ENCODE measurements at regions of chr17 and their contacts with region 1.

Region 1: GRCh38 chr17:1648963-1649843 is 463 bp downstream of the RILP start:
- DNase-seq: peak; percentile 94
- H3K4me3 Mint-ChIP-seq: peak overlapping the region; percentile 62
- H3K27ac Mint-ChIP-seq: no peak overlapping the region
- H3K4me1 Mint-ChIP-seq: peaks cover 40% of the 10 kb centered on the region
- H3K27me3 Mint-ChIP-seq: no peaks in the 10 kb centered on the region

Region 2: GRCh38 chr17:1561400-1562175 is 87.6 kb before region 1 on chr17:
- CTCF ChIA-PET with region 1: no interaction called
- intact Hi-C with region 1: loop called (anchors 2 kb)
- DNase-seq: peak; percentile 34
- H3K4me3 Mint-ChIP-seq: peak overlapping the region; percentile 82
- H3K27ac Mint-ChIP-seq: peak overlapping the region; percentile 71
- H3K4me1 Mint-ChIP-seq: peaks cover 40% of the 10 kb centered on the region
- H3K27me3 Mint-ChIP-seq: no peaks in the 10 kb centered on the region

Region 3: GRCh38 chr17:1684378-1685189 is 35.4 kb after region 1 on chr17 and contains the start of gene PRPF8:
- CTCF ChIA-PET with region 1: interaction called, 6 read pairs
- intact Hi-C with region 1: loop called (anchors 1 kb)
- DNase-seq: peak; percentile 99
- H3K4me3 Mint-ChIP-seq: peak within 1 kb of the TSS; percentile 95
- H3K27ac Mint-ChIP-seq: peak within 1 kb of the TSS; percentile 93
- H3K4me1 Mint-ChIP-seq: peaks cover 31% of the 10 kb centered on the region
- H3K27me3 Mint-ChIP-seq: no peaks in the 10 kb centered on the region
- total RNA-seq, gene PRPF8: 458 to 479 TPM